GM12878 (cell line): ENCODE measurements at regions of chr1 and their contacts with region 1.

Region 1: DNA sequence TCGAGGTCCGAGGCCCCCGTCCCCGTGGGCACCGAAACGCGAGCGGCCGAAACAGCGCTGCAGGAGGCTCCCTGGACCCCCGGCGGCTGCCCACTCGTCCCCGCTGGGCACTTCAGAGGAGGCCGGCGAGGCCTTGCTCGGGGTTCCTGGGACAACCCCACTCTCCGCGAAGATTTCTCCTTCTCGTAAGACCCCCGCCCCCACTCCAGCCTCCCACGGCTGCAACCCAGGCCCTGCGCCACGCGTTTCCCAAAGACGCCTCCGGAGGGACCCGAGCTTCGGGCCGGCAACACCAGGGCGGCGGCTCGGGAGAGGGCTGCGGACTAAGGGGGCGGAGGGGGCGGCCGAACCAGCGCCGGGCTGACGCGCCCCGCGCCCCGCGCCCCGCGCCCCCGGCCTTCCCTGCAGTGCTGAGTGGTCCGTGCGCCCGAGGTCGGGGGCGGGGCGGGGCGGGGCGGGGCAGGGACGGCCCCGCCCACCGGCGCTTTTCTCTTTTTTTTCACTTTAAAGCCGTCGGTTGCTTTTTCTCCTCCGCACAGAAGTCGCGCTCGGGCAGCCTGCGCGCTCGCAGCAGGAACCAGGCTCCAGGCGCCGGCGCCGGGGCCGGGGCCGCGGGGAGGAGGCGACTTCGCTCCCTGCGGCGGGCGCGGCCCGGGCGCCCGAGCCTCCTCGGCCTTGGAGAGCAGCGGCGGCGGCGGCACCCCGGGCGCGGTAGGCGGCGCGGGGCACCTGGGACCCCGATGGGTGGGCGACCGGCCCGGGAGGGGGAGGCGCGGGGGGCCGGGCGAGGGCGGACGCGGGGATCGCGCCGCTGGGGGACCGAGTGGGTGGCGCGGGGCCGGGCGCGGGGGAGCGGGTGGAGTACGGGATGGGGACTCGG is at the start of gene SPSB1:
- DNase-seq: no peak
- ATAC-seq: peak; percentile 67
- H3K4me3 ChIP-seq: peak within 1 kb of the TSS; percentile 77
- H3K27ac ChIP-seq: no peak within 1 kb of the TSS
- H3K4me1 ChIP-seq: peaks cover 13% of the 10 kb centered on the region
- H3K27me3 ChIP-seq: peaks cover 3 to 7% of the 10 kb centered on the region in 2 experiments; a peak in 2 of 4 replicates
- CTCF ChIP-seq: no peak
- EP300 ChIP-seq: no peak
- POLR2A ChIP-seq: peak; percentile 76
- RAD21 ChIP-seq: 0 out of 2 replicates have a peak, but pooled peaks have one; percentile 7
- polyA plus RNA-seq, gene SPSB1: 0.02 TPM in 1 of 2 experiments, not detected in the other

Region 2: GRCh38 chr1:9275567-9276034 is 17.0 kb before region 1 on chr1:
- CTCF ChIA-PET with region 1: interaction called, 16 read pairs
- POLR2A ChIA-PET with region 1: no interaction called
- RAD21 ChIA-PET with region 1: interaction called, 13 read pairs
- SMC1A ChIA-PET with region 1: interaction called, 15 read pairs
- in situ Hi-C with region 1: no loop called
- intact Hi-C with region 1: no loop called
- DNase-seq: peak; percentile 59
- ATAC-seq: peak; percentile 97
- H3K4me3 ChIP-seq: no peak overlapping the region
- H3K27ac ChIP-seq: no peak overlapping the region
- H3K4me1 ChIP-seq: peaks cover 10% of the 10 kb centered on the region
- H3K27me3 ChIP-seq: no peaks in the 10 kb centered on the region
- CTCF ChIP-seq: no peak
- EP300 ChIP-seq: peak; percentile 22 to 41; a peak in 2 of 4 replicates
- POLR2A ChIP-seq: no peak
- RAD21 ChIP-seq: no peak

Region 3: DNA sequence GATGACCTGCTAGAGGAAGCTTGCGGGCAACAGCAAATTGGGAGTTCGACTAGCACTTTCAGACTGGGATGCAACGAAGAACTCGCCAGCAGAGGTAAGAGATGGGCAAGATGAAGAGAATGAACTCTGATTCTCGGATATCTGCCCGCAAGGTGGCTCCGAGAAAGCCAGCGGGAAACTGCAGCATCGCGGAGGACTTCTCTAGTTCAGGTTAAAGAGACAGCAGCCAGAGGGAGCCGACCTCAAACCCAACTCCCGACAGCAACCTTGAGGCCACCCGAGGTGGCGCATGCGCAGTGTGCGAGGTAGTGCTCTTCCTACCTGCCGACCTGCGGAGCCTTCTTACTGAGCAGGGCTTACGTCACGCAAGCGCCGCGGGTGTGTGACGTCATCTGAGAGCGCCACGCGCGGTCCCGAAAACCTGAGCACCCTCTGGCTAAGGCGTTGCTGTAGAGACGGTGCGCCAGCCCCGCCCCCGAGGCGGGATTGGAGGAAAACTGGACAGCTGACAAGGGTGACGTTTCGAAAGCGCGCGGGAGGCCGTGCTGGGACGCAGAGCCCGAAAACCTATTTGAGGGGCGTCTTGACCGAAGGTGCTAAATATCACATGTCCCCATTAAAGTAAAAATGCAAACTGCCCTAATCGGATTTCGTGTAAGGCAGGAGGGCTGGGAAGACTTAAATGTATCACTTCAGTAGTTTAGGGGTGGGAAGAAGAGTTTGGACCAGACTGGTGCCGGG is 136.2 kb after region 1 on chr1:
- CTCF ChIA-PET with region 1: interaction called, 10 read pairs
- POLR2A ChIA-PET with region 1: no interaction called
- RAD21 ChIA-PET with region 1: interaction called, 21 read pairs
- SMC1A ChIA-PET with region 1: interaction called, 10 read pairs
- in situ Hi-C with region 1: no loop called
- intact Hi-C with region 1: no loop called
- DNase-seq: peak; percentile 100
- ATAC-seq: peak; percentile 89
- H3K4me3 ChIP-seq: peak overlapping the region; percentile 64
- H3K27ac ChIP-seq: peak overlapping the region; percentile 43
- H3K4me1 ChIP-seq: peaks cover 36% of the 10 kb centered on the region
- H3K27me3 ChIP-seq: no peaks in the 10 kb centered on the region
- CTCF ChIP-seq: peak in 1 of 3 experiments; percentile 4; a peak in 1 of 6 replicates
- EP300 ChIP-seq: no peak
- POLR2A ChIP-seq: peak; percentile 77
- RAD21 ChIP-seq: no peak

Region 4: DNA sequence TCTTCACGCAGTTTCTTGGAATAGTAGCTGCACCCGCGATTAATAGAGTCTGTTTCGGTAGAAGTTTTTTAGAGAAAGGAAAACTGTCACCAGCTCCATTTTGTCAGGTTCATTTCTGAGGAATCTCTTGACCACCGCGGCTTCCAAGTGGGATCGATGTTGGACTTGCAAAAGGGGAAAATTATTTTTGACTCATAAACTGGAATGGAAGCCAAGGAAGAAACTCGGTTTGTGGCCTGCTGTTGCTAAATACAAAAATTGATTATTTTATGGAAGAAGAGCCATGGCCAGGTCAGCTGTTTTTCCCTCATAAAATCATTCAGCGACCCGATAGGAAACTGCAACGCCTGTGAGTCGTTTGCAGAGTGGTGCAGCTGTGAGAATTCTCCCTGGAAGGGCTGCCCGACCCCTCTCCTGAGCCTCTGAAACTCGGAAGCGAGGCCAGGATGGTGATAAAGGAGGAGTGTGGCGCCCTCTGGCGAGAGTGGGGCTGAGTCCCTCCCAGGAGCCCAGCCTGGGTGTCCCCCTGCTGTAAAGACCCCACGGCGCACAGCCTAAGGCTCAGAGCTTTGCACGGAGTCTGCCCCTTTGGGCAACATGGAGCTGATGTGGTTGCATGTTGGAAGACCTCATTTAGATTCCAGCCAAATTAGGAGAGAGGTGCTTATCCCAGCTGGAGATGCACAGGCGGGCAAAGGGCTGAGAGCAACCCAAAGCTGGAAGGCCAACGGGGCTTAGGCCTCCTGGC is 163.1 kb after region 1 on chr1:
- CTCF ChIA-PET with region 1: interaction called, 183 read pairs
- POLR2A ChIA-PET with region 1: no interaction called
- RAD21 ChIA-PET with region 1: interaction called, 100 read pairs
- SMC1A ChIA-PET with region 1: interaction called, 123 read pairs
- in situ Hi-C with region 1: loop called (anchors 5 kb)
- intact Hi-C with region 1: loop called (anchors 1 kb)
- DNase-seq: no peak
- ATAC-seq: peak; percentile 94
- H3K4me3 ChIP-seq: no peak overlapping the region
- H3K27ac ChIP-seq: no peak overlapping the region
- H3K4me1 ChIP-seq: no peaks in the 10 kb centered on the region
- H3K27me3 ChIP-seq: no peaks in the 10 kb centered on the region; a peak in 1 of 4 replicates
- CTCF ChIP-seq: peak; percentile 83 to 87 (median 84)
- EP300 ChIP-seq: no peak
- POLR2A ChIP-seq: no peak
- RAD21 ChIP-seq: peak; percentile 91

Region 5: GRCh38 chr1:9494929-9495758 is 202.5 kb after region 1 on chr1:
- CTCF ChIA-PET with region 1: interaction called, 123 read pairs
- POLR2A ChIA-PET with region 1: no interaction called
- RAD21 ChIA-PET with region 1: interaction called, 52 read pairs
- SMC1A ChIA-PET with region 1: interaction called, 63 read pairs
- in situ Hi-C with region 1: loop called (anchors 5 kb)
- intact Hi-C with region 1: loop called (anchors 1 kb)
- DNase-seq: no peak
- ATAC-seq: peak; percentile 92
- H3K4me3 ChIP-seq: peak overlapping the region; percentile 5; the same call in 1 of the 2 replicates
- H3K27ac ChIP-seq: no peak overlapping the region
- H3K4me1 ChIP-seq: peaks cover 10% of the 10 kb centered on the region; the same call in 1 of the 2 replicates
- H3K27me3 ChIP-seq: no peaks in the 10 kb centered on the region
- CTCF ChIP-seq: peak; percentile 86 to 96 (median 88)
- EP300 ChIP-seq: no peak
- POLR2A ChIP-seq: peak; percentile 35; the same call in 1 of the 2 replicates
- RAD21 ChIP-seq: peak; percentile 73

Region 6: GRCh38 chr1:9558271-9558945 is 265.8 kb after region 1 on chr1:
- CTCF ChIA-PET with region 1: no interaction called
- POLR2A ChIA-PET with region 1: no interaction called
- RAD21 ChIA-PET with region 1: no interaction called
- SMC1A ChIA-PET with region 1: no interaction called
- in situ Hi-C with region 1: no loop called
- intact Hi-C with region 1: no loop called
- DNase-seq: no peak
- ATAC-seq: no peak
- H3K4me3 ChIP-seq: no peak overlapping the region
- H3K27ac ChIP-seq: no peak overlapping the region
- H3K4me1 ChIP-seq: no peaks in the 10 kb centered on the region
- H3K27me3 ChIP-seq: no peaks in the 10 kb centered on the region
- CTCF ChIP-seq: no peak
- EP300 ChIP-seq: no peak
- POLR2A ChIP-seq: no peak
- RAD21 ChIP-seq: no peak

Region 7: DNA sequence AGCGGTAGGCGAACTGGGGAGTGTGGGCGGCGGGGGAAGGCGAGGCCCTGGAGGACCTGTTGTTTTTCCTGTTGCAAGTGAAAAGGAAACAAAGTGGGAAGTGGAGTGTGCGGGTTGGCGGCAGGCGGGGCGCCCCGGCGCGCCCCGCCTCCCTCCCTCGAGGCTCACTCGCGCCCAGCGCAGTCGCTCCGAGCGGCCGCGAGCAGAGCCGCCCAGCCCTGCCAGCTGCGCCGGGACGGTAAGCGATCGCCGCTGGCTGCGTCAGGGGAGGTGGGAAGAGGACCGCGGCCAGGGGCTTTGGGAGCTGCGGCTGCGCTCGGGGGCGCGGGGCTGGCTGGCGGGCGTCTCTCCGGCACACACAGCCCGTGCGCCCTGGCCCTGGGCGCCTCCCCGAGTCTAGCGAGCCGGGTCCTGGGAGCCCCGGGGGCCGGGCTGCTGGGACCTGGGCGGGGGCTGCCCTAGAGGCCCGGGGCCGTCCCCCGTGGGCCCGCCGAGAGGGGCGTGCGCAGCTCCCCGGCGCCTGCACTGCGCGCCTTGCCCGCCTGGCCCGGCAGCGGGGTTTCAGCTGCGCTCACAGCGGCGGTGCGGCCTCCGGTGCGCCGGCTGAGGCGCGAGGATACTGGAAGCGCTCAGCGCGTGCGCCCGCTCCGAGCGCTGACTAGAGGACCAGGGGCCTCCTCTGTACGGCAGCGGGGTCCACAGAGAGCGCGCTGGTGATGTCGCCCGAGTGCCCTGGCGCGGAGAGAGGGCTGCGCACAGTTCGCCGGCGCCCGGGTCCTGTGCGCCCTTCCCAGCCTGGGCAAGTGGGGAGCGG is 359.2 kb after region 1 on chr1 and contains the start of gene PIK3CD:
- CTCF ChIA-PET with region 1: no interaction called
- POLR2A ChIA-PET with region 1: no interaction called
- RAD21 ChIA-PET with region 1: no interaction called
- SMC1A ChIA-PET with region 1: no interaction called
- in situ Hi-C with region 1: no loop called
- intact Hi-C with region 1: no loop called
- DNase-seq: no peak
- ATAC-seq: peak; percentile 47
- H3K4me3 ChIP-seq: peak within 1 kb of the TSS; percentile 86
- H3K27ac ChIP-seq: peak within 1 kb of the TSS; percentile 89
- H3K4me1 ChIP-seq: peaks cover 8% of the 10 kb centered on the region
- H3K27me3 ChIP-seq: no peaks in the 10 kb centered on the region
- CTCF ChIP-seq: no peak
- EP300 ChIP-seq: no peak
- POLR2A ChIP-seq: peak; percentile 79
- RAD21 ChIP-seq: no peak
- polyA plus RNA-seq, gene PIK3CD: 7.0 to 12.7 TPM